ENCODE measurements at regions of chr2 and their contacts with region 1.

Region 1: DNA sequence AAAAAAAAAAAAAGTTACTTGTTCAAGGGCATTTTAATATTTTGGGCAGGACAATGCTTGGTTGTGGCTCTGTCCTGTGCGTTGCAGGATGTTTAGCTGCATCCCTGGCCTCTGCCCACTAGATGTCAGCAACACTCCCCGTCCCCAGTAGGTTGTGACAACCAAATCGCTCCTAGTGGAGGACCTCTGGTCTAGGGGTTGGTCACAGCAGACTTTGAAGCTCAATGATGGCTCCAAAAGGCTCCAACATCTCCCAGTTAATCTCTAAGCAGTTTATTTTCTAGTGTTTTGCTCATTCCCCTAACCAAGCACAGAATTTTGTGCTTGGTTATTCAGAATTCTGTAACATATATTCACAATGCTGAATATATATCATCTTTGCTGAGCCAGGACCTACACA is 67.0 kb downstream of the CHRNA1 start:
- DNase-seq: peak; percentile 57
- H3K4me3 Mint-ChIP-seq: no peak overlapping the region
- H3K27ac Mint-ChIP-seq: no peak overlapping the region
- H3K4me1 Mint-ChIP-seq: peaks cover 14% of the 10 kb centered on the region
- H3K27me3 Mint-ChIP-seq: peaks cover 14% of the 10 kb centered on the region

Region 2: GRCh38 chr2:174729797-174730697 is 32.8 kb after region 1 on chr2:
- intact Hi-C with region 1: loop called (anchors 2 kb)
- DNase-seq: peak; percentile 26
- H3K4me3 Mint-ChIP-seq: peak overlapping the region; percentile 84
- H3K27ac Mint-ChIP-seq: no peak overlapping the region
- H3K4me1 Mint-ChIP-seq: peaks cover 22% of the 10 kb centered on the region
- H3K27me3 Mint-ChIP-seq: peaks cover 44% of the 10 kb centered on the region

Region 3: GRCh38 chr2:174771631-174772471 is 74.6 kb after region 1 on chr2:
- intact Hi-C with region 1: loop called (anchors 2 kb)
- DNase-seq: no peak
- H3K4me3 Mint-ChIP-seq: no peak overlapping the region
- H3K27ac Mint-ChIP-seq: no peak overlapping the region
- H3K4me1 Mint-ChIP-seq: peaks cover 19% of the 10 kb centered on the region
- H3K27me3 Mint-ChIP-seq: peaks cover 4% of the 10 kb centered on the region

Region 4: GRCh38 chr2:174985630-174986029 is 288.4 kb after region 1 on chr2:
- intact Hi-C with region 1: loop called (anchors 1 kb)
- DNase-seq: no peak
- H3K4me3 Mint-ChIP-seq: no peak overlapping the region
- H3K27ac Mint-ChIP-seq: no peak overlapping the region
- H3K4me1 Mint-ChIP-seq: peaks cover 7% of the 10 kb centered on the region
- H3K27me3 Mint-ChIP-seq: peaks cover 20% of the 10 kb centered on the region

Region 5: DNA sequence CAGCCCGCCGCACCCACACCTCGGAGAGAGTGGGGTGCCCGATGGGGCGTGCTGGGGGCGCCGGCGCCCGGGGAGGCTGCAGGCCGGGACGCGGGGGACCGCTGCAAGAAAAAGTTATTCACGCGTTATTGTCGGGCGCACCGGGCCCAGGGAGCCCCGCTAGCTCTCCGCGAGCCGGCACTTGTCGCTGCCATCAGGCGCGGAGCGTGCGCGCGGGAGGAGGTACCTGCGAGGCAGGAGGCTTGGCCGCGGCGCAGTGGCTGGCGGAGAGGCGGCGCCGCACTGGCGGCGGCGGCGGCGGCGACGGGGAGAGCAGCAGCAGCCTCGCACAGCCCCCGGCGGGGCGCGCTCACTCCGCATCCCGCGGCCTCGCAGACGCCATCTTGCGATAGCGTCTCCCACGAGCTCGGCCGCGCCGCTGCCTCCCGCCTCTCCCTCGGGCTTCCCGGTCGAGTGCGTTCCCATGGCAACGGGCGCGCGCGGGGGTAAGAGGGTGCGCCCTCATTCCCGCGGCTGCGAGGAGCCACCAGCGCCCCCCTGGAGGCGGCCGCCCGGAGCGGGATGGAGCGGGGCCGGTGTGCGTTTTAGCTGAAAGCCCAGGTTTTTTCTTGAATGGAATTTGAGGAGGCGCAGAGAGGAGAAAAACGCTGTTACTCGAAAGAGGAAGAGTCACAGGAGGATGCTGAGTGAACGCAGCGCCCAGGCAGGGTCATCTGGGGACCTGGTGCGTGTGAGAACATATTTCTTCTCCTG is 307.9 kb after region 1 on chr2 and contains the start of gene CHN1:
- intact Hi-C with region 1: loop called (anchors 5 kb)
- DNase-seq: peak; percentile 47
- H3K4me3 Mint-ChIP-seq: peak within 1 kb of the TSS; percentile 85
- H3K27ac Mint-ChIP-seq: peak within 1 kb of the TSS; percentile 55
- H3K4me1 Mint-ChIP-seq: no peaks in the 10 kb centered on the region
- H3K27me3 Mint-ChIP-seq: peaks cover 70% of the 10 kb centered on the region
- total RNA-seq, gene CHN1: 3.4 and 4.8 TPM in 2 replicates

Region 6: DNA sequence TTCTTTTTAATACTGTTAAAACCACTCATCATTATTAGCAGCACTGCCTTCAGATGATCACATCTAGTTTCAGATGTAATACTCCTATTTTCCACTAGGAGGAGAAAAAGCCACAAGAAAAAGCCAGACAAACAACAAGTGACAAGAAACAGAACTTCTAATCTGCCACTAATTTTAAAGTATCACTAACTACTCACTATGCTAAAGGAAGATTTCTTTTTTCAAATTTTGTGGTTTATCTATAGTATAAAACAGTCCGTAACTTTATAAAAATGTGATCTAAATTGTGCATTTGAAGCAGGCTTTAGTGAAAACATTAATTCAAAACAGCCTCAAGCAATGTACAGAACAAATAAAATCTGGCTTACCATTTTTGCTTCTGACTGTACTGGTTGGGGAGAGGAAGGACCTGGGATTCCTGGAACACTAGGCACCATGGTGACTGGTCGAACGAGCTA is 414.0 kb after region 1 on chr2:
- intact Hi-C with region 1: loop called (anchors 1 kb)
- DNase-seq: no peak
- H3K4me3 Mint-ChIP-seq: no peak overlapping the region
- H3K27ac Mint-ChIP-seq: peak overlapping the region; percentile 31
- H3K4me1 Mint-ChIP-seq: peaks cover 4% of the 10 kb centered on the region
- H3K27me3 Mint-ChIP-seq: no peaks in the 10 kb centered on the region

Region 7: GRCh38 chr2:175282290-175282689 is 585.0 kb after region 1 on chr2:
- intact Hi-C with region 1: loop called (anchors 1 kb)
- DNase-seq: no peak
- H3K4me3 Mint-ChIP-seq: no peak overlapping the region
- H3K27ac Mint-ChIP-seq: no peak overlapping the region
- H3K4me1 Mint-ChIP-seq: no peaks in the 10 kb centered on the region
- H3K27me3 Mint-ChIP-seq: peaks cover 11% of the 10 kb centered on the region

Region 8: GRCh38 chr2:175807031-175807873 is 1110.0 kb after region 1 on chr2:
- intact Hi-C with region 1: no loop called
- DNase-seq: no peak
- H3K4me3 Mint-ChIP-seq: no peak overlapping the region
- H3K27ac Mint-ChIP-seq: no peak overlapping the region
- H3K4me1 Mint-ChIP-seq: no peaks in the 10 kb centered on the region
- H3K27me3 Mint-ChIP-seq: peaks cover 2% of the 10 kb centered on the region

Measured in activated T-helper 1 cell treated with anti-CD3 and anti-CD28 coated beads, Interleukin-12 subunit alpha, Interleukin-12 subunit beta, Interleukin-2, Interleukin-4 antibody, amounts not matched to agents 30 ng/mL and 10 ng/mL and 1 ng/mL, durations not matched to agents 14 hours and 24 hours and 36 hours (primary cell).